B cell (primary cell): ENCODE measurements at regions of chr2 and their contacts with region 1.

Region 1: DNA sequence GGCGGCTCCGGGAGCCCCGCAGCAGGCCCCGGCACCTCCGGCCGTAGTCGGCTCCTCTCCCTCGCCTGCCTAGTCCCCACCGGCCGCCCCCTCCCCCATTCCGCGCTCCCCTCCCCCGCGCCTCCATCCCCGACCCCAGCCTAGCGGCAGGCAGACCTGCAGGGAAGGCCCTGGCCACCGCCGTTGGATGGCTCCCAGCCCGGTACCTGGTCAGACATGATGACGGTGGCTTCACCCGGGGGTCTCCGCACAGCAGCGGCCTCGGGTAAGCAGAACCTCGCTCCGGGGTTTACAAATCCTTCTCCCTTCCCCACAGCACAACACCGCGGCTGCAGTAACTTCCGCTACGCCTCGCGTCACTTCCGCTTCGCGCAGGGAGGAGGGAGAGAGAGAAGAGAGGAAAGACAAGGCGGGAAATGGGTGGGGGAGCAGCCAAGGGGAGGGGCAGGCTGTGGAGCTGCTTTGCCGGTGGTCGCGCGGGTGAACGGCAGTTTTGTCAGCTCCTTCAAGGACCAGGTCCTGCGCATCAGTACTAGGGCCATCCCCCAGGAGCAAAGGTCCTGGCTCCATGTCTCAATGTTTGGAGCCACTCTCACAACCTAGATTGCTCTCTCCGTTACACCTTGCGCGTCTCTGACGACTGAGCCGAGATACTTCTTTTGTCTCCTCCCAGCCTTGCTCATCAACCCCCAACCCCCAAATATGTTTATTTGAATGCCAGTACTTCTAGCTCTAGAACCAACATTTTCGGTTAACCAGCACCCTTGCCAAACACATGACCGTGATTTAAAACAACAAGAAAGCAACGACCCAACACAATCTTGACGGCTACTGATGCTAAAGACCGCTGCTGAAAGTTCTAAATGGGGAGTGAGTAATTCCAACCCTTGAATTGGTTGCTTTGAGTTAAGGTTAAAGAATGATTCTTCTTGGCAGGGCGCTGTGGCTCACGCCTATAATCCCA is at the start of gene SUMO1:
- DNase-seq: peak; percentile 92
- ATAC-seq: peak; percentile 95
- H3K4me3 ChIP-seq: peak within 1 kb of the TSS; percentile 75 to 88 (median 83)
- H3K4me3 Mint-ChIP-seq: peak within 1 kb of the TSS; percentile 96
- H3K27ac ChIP-seq: peak within 1 kb of the TSS; percentile 78 to 89
- H3K27ac Mint-ChIP-seq: peak within 1 kb of the TSS; percentile 91
- H3K4me1 ChIP-seq: peaks cover 12 to 21% of the 10 kb centered on the region in 2 donors
- H3K4me1 Mint-ChIP-seq: peaks cover 32% of the 10 kb centered on the region
- H3K27me3 ChIP-seq: peaks cover 0 to 1% (median 0%) of the 10 kb centered on the region in 4 experiments
- H3K27me3 Mint-ChIP-seq: no peaks in the 10 kb centered on the region
- CTCF ChIP-seq: no peak
- total RNA-seq, gene SUMO1: 49.1 and 60.0 TPM in 2 replicates

Region 2: GRCh38 chr2:202033321-202034248 is 204.9 kb before region 1 on chr2 and contains the start of gene FZD7:
- CTCF ChIA-PET with region 1: no interaction called
- POLR2A ChIA-PET with region 1: no interaction called
- intact Hi-C with region 1: loop called (anchors 10 kb)
- DNase-seq: peak; percentile 90
- ATAC-seq: peak; percentile 85
- H3K4me3 ChIP-seq: peak within 1 kb of the TSS; percentile 63 to 89 (median 75)
- H3K4me3 Mint-ChIP-seq: peak within 1 kb of the TSS; percentile 91
- H3K27ac ChIP-seq: no peak within 1 kb of the TSS
- H3K27ac Mint-ChIP-seq: peak within 1 kb of the TSS; percentile 78
- H3K4me1 ChIP-seq: peaks cover 20 to 25% of the 10 kb centered on the region in 2 donors
- H3K4me1 Mint-ChIP-seq: peaks cover 13% of the 10 kb centered on the region
- H3K27me3 ChIP-seq: peaks cover 0 to 43% (median 32%) of the 10 kb centered on the region in 4 experiments
- H3K27me3 Mint-ChIP-seq: peaks cover 22% of the 10 kb centered on the region
- CTCF ChIP-seq: no peak
- total RNA-seq, gene FZD7: 2.1 TPM in 2 replicates

Region 3: DNA sequence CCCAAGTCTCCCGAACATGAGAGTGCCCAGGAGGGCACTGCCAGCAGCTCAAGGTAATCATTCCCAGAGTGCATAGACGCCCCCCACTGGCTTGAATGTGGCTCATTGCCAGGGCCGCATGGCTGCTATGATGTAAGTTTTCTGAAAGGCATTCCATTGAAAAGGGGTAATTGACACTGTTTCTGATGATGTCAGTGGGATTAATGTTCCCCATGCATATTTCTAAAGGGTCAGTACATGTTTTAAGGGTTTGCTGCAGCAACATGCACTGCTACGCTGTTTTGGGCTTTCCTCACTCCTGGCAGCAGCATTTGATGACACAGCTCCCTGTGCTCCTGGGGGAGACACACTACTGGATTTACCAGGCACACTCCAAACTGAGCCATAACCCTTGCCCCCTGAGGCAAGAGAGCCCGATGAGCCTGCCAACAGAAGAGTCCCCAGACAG is 128.8 kb before region 1 on chr2:
- CTCF ChIA-PET with region 1: no interaction called
- POLR2A ChIA-PET with region 1: no interaction called
- intact Hi-C with region 1: no loop called
- DNase-seq: no peak
- ATAC-seq: no peak
- H3K4me3 ChIP-seq: no peak overlapping the region
- H3K4me3 Mint-ChIP-seq: no peak overlapping the region
- H3K27ac ChIP-seq: no peak overlapping the region
- H3K27ac Mint-ChIP-seq: no peak overlapping the region
- H3K4me1 ChIP-seq: no peaks in the 10 kb centered on the region
- H3K4me1 Mint-ChIP-seq: no peaks in the 10 kb centered on the region
- H3K27me3 ChIP-seq: peaks cover 0 to 4% (median 0%) of the 10 kb centered on the region in 4 experiments
- H3K27me3 Mint-ChIP-seq: peaks cover 15% of the 10 kb centered on the region
- CTCF ChIP-seq: no peak

Region 4: DNA sequence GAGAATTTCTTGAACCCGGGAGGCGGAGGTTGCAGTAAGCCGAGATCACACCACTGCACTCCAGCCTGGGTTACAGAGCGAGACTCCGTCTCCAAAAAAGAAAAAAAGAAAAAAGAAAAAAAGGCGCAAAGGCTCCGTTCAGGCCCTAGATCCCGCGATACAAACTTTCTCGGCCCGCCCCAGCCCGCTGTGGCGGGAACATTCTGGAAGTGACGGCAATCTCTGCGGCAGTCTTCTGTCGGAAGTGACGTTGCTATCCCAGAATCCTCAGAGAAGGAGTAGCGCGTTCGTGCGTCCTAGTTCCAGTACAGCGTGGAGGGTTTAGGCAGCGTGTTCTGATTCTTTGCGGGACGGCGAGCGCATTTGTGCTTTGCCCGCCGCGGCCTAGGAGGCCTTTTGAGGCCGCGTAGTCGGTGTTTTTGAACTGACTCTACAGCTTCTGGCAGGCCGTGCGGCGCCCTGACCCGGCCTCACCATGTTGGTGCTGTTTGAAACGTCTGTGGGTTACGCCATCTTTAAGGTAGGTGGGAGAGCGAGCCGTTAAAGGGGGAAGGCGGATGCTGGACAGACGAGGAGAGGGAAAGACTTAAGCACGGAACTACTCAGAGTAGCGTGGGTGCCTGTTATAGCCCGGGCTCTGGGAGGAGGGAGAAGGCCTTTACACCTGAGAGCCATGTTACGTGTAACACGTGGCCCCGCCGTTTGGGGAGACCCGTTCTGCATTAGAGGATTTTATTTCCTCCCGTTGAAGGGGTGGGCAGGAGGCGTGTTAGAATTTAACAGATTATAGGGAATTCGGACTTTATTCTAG is 27.2 kb after region 1 on chr2 and contains the start of gene NOP58:
- CTCF ChIA-PET with region 1: no interaction called
- POLR2A ChIA-PET with region 1: interaction called, 9 read pairs
- intact Hi-C with region 1: loop called (anchors 1 kb)
- DNase-seq: peak; percentile 95
- ATAC-seq: peak; percentile 86
- H3K4me3 ChIP-seq: peak within 1 kb of the TSS; percentile 70 to 100 (median 97)
- H3K4me3 Mint-ChIP-seq: peak within 1 kb of the TSS; percentile 57
- H3K27ac ChIP-seq: peak within 1 kb of the TSS; percentile 81 to 93
- H3K27ac Mint-ChIP-seq: peak within 1 kb of the TSS; percentile 71
- H3K4me1 ChIP-seq: peaks cover 25 to 42% of the 10 kb centered on the region in 2 donors
- H3K4me1 Mint-ChIP-seq: peaks cover 19% of the 10 kb centered on the region
- H3K27me3 ChIP-seq: no peaks in the 10 kb centered on the region
- H3K27me3 Mint-ChIP-seq: no peaks in the 10 kb centered on the region
- CTCF ChIP-seq: no peak
- total RNA-seq, gene NOP58: 136 and 138 TPM in 2 replicates